Heart right ventricle (tissue), 16 donors: ENCODE measurements at regions of chr3 and their contacts with region 1.

Region 1: GRCh38 chr3:44729384-44729910 is at the start of gene ZNF501:
- DNase-seq: peak; percentile 93 to 96
- ATAC-seq: peak; percentile 99 to 100 (median 100)
- H3K4me3 ChIP-seq: peak within 1 kb of the TSS; percentile 61 to 91 (median 80)
- H3K27ac ChIP-seq: peak within 1 kb of the TSS in 9 of 10 donors; percentile 51 to 79 (median 63)
- H3K4me1 ChIP-seq: peaks cover 0 to 11% (median 3%) of the 10 kb centered on the region in 9 donors
- H3K27me3 ChIP-seq: no peaks in the 10 kb centered on the region
- CTCF ChIP-seq: no peak
- total RNA-seq, gene ZNF501: 3.0 to 8.7 (median 4.8) TPM

Region 2: DNA sequence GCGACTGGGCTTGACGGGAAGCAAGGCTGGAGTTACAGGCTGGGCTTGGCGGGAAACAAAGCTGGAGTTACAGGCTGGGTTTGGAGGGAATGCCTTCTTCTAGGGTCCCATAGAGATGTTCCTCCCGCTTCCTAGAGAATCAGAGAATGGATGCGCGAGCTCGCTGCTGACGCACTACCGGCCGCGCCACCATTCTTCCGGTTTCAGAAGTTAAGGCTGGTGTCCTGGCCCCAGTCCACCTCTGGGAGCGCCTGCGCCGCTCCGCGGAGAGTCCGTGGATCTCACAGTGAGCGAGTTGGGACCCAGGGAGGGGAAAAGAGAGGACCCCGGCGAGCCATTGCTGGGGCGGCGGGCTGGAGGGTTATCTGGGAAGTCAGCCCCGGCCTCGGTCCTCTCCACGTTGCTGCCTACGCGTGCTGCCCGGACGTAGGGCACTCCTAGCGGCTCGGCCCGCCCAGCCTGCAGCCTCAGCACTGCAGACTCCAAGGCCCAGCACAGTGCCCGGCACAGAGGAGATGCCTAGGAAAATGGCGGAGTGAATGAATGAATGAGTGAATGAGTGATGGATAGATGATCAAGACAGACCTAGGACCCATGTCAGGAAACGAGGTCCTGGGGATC is 16.9 kb before region 1 on chr3 and contains the start of gene ZNF502:
- intact Hi-C with region 1: loop called in 2 of 10 experiments (anchors 1 to 2 kb)
- DNase-seq: peak; percentile 87 to 91
- ATAC-seq: peak; percentile 98 to 99 (median 98)
- H3K4me3 ChIP-seq: peak within 1 kb of the TSS; percentile 67 to 97 (median 83)
- H3K27ac ChIP-seq: peak within 1 kb of the TSS in 9 of 10 donors; percentile 41 to 82 (median 73)
- H3K4me1 ChIP-seq: peaks cover 0 to 12% (median 6%) of the 10 kb centered on the region in 9 donors
- H3K27me3 ChIP-seq: peaks cover 0 to 21% (median 5%) of the 10 kb centered on the region in 7 donors
- CTCF ChIP-seq: peak in 8 of 9 donors; percentile 10 to 58 (median 44)
- total RNA-seq, gene ZNF502: 2.8 to 4.6 (median 3.5) TPM

Region 3: GRCh38 chr3:44861412-44862220 is 132.2 kb after region 1 on chr3 and contains the start of gene TMEM42:
- intact Hi-C with region 1: loop called in 1 of 10 experiments (anchors 10 kb)
- DNase-seq: peak; percentile 88 to 94
- ATAC-seq: peak; percentile 98 to 100 (median 99)
- H3K4me3 ChIP-seq: peak within 1 kb of the TSS; percentile 30 to 84 (median 73)
- H3K27ac ChIP-seq: peak within 1 kb of the TSS; percentile 61 to 97 (median 94)
- H3K4me1 ChIP-seq: peaks cover 0 to 16% (median 11%) of the 10 kb centered on the region in 9 donors
- H3K27me3 ChIP-seq: no peaks in the 10 kb centered on the region
- CTCF ChIP-seq: peak in 8 of 9 donors; percentile 11 to 60 (median 49)
- total RNA-seq, gene TMEM42: 8.4 to 13.1 (median 11.2) TPM

Region 4: GRCh38 chr3:44954962-44955361 is 225.5 kb after region 1 on chr3:
- intact Hi-C with region 1: no loop called
- DNase-seq: no peak
- ATAC-seq: peak in 1 of 8 donors; percentile 28
- H3K4me3 ChIP-seq: no peak overlapping the region
- H3K27ac ChIP-seq: peak overlapping the region in 1 of 10 donors; percentile 82
- H3K4me1 ChIP-seq: peaks cover 0 to 35% (median 8%) of the 10 kb centered on the region in 9 donors
- H3K27me3 ChIP-seq: no peaks in the 10 kb centered on the region
- CTCF ChIP-seq: no peak